Activated CD8-positive, alpha-beta T cell treated with anti-CD3 and anti-CD28 coated beads for 36 hours (primary cell): ENCODE measurements at regions of chr20 and their contacts with region 1.

Region 1: DNA sequence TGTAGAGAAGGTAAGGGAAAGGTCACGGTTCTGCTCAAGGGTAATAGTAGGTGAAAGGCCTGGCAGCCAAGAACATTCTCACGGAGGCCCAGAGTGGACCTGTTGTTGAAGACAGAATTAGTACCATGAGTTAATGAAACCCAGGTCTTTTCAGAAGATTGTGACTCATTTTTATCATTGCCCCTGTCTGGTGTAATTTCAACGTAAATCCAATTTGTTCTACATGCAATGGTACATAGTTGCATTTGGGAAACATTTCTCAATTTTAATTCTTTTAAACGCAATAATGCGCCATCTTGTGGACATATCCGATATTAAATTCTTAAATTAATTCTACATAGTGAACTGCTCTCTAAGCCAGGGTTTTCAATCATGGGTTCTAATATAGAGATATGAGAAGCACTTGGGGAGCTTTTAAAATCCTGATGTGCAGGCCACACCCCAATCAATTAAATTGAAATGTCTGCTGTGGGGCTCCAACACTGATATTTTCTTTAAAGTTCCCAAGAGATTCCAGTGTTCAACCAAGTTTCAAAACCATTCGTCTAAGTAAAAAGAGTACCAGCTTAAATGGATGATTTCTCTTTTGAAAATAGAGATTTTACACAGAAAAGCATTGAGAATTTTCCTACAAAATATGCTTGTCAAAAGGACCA is 257.4 kb downstream of the PLCB1 start:
- DNase-seq: no peak
- ATAC-seq: no peak
- H3K4me3 Mint-ChIP-seq: no peak overlapping the region
- H3K27ac Mint-ChIP-seq: no peak overlapping the region
- H3K4me1 Mint-ChIP-seq: peaks cover 7% of the 10 kb centered on the region
- H3K27me3 Mint-ChIP-seq: no peaks in the 10 kb centered on the region
- CTCF ChIP-seq: peak; percentile 81

Region 2: GRCh38 chr20:8131598-8132483 is 257.7 kb before region 1 on chr20 and contains the start of gene PLCB1:
- CTCF ChIA-PET with region 1: interaction called, 21 read pairs
- POLR2A ChIA-PET with region 1: no interaction called
- intact Hi-C with region 1: loop called (anchors 5 kb)
- DNase-seq: peak; percentile 86
- ATAC-seq: peak; percentile 93
- H3K4me3 Mint-ChIP-seq: peak within 1 kb of the TSS; percentile 76
- H3K27ac Mint-ChIP-seq: peak within 1 kb of the TSS; percentile 27
- H3K4me1 Mint-ChIP-seq: peaks cover 26% of the 10 kb centered on the region
- H3K27me3 Mint-ChIP-seq: peaks cover 33% of the 10 kb centered on the region
- CTCF ChIP-seq: peak; percentile 73
- total RNA-seq, gene PLCB1: 3.1 to 3.6 TPM

Region 3: DNA sequence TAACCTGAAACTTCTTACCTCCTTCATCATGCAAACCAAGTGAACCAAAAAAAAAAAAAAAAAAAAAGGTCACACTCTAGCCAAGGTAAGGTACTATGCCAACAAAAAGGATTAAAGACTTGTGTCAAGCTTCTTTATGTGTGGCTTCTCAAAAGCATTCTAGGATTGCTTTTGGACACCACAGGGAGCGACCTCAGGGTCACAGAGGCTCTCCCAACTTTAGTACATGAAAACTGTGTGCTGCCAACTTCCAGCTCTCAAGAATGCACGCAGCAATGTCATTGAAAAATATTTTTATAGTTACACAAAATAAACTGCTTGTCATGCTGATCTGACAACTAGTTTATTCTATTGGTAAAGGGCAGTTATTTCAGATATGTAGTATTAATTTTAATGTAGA is 13.6 kb before region 1 on chr20:
- CTCF ChIA-PET with region 1: interaction called, 17 read pairs
- POLR2A ChIA-PET with region 1: no interaction called
- intact Hi-C with region 1: no loop called
- DNase-seq: no peak
- ATAC-seq: no peak
- H3K4me3 Mint-ChIP-seq: no peak overlapping the region
- H3K27ac Mint-ChIP-seq: no peak overlapping the region
- H3K4me1 Mint-ChIP-seq: no peaks in the 10 kb centered on the region
- H3K27me3 Mint-ChIP-seq: no peaks in the 10 kb centered on the region
- CTCF ChIP-seq: no peak

Region 4: GRCh38 chr20:8399947-8400346 is 10.4 kb after region 1 on chr20:
- CTCF ChIA-PET with region 1: interaction called, 16 read pairs
- POLR2A ChIA-PET with region 1: no interaction called
- intact Hi-C with region 1: no loop called
- DNase-seq: no peak
- ATAC-seq: peak; percentile 79
- H3K4me3 Mint-ChIP-seq: no peak overlapping the region
- H3K27ac Mint-ChIP-seq: no peak overlapping the region
- H3K4me1 Mint-ChIP-seq: peaks cover 10% of the 10 kb centered on the region
- H3K27me3 Mint-ChIP-seq: no peaks in the 10 kb centered on the region
- CTCF ChIP-seq: no peak

Region 5: DNA sequence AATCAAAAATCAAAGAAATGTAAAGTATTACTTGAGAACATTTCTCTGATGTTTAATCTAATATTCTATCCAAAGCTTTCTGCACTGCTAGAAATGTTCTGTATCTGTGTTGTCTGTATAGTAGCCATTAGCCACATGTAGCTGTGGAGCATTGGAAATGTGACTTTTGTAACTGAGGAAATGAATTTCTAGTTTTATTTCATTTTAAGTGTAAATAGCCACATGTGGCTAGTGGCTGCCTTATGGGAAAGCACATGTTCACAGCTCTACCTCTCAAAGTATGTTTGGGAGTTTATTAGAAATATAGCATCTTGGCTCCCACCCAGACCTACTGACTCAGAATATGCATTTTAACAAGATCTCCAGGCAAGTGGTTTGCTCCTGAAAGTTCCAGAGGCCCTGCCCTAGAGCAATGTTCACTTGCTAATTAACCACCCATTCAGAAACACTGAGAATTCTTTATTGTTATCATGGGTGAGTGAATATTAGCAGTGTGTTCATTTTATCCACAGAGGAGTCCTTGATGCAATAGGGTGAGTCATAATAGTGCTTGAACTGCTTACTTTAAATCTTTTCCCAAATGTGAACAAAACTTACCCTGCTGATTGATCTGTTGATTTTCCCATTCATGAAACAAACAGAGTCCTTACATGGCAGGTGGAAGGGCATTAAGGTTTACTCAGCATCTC is 25.2 kb after region 1 on chr20:
- CTCF ChIA-PET with region 1: no interaction called
- POLR2A ChIA-PET with region 1: no interaction called
- intact Hi-C with region 1: no loop called
- DNase-seq: no peak
- ATAC-seq: no peak
- H3K4me3 Mint-ChIP-seq: no peak overlapping the region
- H3K27ac Mint-ChIP-seq: no peak overlapping the region
- H3K4me1 Mint-ChIP-seq: no peaks in the 10 kb centered on the region
- H3K27me3 Mint-ChIP-seq: no peaks in the 10 kb centered on the region
- CTCF ChIP-seq: no peak